ENCODE measurements at regions of chr11 and their contacts with region 1.

Region 1: DNA sequence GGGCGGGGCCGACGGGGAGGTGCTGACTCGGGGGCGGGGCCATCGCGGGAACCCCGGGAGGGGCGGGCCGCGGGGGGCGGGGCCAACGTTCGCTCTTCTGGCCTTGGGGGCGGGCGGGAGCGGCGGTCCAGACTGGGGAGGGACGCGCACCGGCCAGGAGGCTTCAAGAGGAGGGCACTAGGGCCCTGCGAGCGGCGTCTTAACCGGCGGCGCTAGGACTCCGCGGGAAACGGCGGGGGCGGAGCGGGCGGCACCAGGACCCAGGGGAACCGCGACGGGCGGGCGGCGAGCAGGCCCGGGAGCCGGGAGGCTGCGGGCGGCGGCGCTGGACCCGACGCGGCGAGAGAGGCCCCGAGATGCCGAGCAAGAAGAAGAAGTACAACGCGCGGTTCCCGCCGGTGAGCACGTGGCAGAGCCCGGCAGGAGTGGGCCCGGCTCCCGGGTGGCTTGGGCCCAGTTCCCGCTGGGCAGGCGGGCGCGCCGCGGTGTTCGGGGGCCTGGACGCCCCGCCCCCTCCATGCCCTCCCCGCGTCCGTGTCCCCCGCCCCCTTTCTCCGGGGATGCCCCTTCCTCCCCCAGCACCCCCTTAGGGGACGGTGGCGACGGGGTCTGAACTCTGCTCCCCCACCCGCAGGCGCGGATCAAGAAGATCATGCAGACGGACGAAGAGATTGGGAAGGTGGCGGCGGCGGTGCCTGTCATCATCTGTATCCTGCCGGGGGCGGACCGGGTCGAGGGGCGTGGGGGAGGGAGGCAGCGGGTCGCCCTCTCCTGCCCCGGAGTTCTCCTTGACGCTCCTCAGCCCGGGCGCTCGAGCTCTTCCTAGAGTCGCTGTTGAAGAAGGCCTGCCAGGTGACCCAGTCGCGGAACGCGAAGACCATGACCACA is at the start of gene DRAP1:
- DNase-seq: peak; percentile 100
- ATAC-seq: peak; percentile 94
- H3K4me3 Mint-ChIP-seq: peak within 1 kb of the TSS; percentile 91
- H3K27ac Mint-ChIP-seq: peak within 1 kb of the TSS; percentile 88
- H3K4me1 Mint-ChIP-seq: peaks cover 35% of the 10 kb centered on the region
- H3K27me3 Mint-ChIP-seq: no peaks in the 10 kb centered on the region
- total RNA-seq, gene DRAP1: 111 to 158 TPM

Region 2: DNA sequence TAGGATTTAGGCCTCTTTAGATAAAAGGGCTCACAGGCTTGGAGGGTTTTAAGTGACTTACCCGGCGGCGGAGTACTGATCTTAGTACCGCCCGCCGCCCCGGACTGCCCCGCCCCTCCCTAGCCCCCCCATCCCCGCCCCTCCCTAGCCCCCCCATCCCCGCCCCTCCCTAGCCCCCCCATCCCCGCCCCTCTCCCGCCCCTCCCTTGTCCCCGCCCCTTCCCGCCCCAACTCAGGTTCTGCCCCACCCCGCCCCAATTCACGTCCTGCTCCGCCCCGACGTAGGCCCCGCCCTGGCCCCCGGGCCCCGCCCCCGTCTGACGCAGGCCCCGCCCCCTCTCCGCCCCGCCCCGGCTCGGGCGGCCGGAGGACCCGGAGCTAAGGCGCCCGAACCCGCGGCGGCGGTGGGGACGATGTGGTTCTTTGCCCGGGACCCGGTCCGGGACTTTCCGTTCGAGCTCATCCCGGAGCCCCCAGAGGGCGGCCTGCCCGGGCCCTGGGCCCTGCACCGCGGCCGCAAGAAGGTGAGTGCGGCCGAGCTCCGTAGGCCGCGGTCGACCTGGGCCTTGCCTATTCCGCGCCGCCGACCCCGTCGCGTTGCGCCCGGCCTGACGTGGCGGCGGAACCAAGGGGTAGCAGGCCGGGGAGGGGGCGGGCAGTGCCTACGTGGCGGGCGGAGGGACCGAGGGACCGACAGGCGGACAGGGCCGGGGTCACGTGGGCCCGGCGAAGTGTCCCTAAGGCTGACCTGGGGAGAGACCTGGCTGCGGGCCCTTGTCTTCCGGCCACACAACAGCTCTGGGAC is 394.4 kb before region 1 on chr11 and contains the start of gene SCYL1:
- CTCF ChIA-PET with region 1: no interaction called
- POLR2A ChIA-PET with region 1: no interaction called
- intact Hi-C with region 1: loop called in 1 of 2 experiments (anchors 1 kb)
- DNase-seq: peak; percentile 91
- ATAC-seq: peak; percentile 85
- H3K4me3 Mint-ChIP-seq: peak within 1 kb of the TSS; percentile 86
- H3K27ac Mint-ChIP-seq: peak within 1 kb of the TSS; percentile 93
- H3K4me1 Mint-ChIP-seq: peaks cover 51% of the 10 kb centered on the region
- H3K27me3 Mint-ChIP-seq: no peaks in the 10 kb centered on the region
- total RNA-seq, gene SCYL1: 66.5 to 78.8 TPM

Region 3: DNA sequence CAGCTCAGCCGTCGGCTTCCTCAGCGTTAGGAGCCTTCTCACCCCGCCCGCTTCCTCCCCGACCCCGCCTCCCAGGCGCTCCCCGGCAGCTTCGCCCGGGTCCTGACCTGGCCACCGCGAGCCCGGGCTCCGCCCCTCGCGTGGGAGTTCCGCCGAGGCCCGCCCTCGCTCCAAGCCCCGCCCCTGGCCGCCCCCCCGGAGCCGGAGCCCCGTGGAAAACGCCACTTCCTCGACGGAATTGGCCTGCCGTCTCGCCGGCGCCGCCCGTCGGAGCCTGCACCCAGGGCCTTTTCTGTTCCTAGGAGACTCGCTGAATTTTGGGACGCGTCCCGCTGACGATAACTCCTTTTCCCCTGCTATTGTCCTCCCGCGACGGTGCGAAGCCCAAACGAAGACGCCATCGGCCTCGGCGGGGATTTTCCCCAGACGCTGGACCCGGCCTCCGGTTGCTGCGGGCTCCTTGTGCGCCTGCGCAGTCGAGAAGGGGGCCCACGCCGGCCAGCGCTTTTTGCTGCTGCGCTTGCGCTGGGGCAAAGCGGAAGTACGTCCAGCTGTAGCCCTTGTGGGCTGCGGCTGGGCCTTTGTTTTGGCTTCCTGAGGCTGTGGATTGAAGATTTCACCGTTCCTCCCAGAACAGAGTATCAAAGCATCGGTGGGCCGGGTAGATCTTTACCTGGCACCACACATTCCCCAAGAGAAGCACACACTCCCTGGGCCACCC is 266.7 kb before region 1 on chr11:
- CTCF ChIA-PET with region 1: no interaction called
- POLR2A ChIA-PET with region 1: no interaction called
- intact Hi-C with region 1: loop called in 1 of 2 experiments (anchors 1 kb)
- DNase-seq: peak; percentile 98
- ATAC-seq: peak; percentile 89
- H3K4me3 Mint-ChIP-seq: peak overlapping the region; percentile 79
- H3K27ac Mint-ChIP-seq: peak overlapping the region; percentile 95
- H3K4me1 Mint-ChIP-seq: peaks cover 45% of the 10 kb centered on the region
- H3K27me3 Mint-ChIP-seq: no peaks in the 10 kb centered on the region

Region 4: GRCh38 chr11:65720237-65720934 is 199.0 kb before region 1 on chr11 and contains the start of gene RNASEH2C:
- CTCF ChIA-PET with region 1: no interaction called
- POLR2A ChIA-PET with region 1: no interaction called
- intact Hi-C with region 1: loop called in 1 of 2 experiments (anchors 1 kb)
- DNase-seq: peak; percentile 92
- ATAC-seq: peak; percentile 94
- H3K4me3 Mint-ChIP-seq: peak within 1 kb of the TSS; percentile 84
- H3K27ac Mint-ChIP-seq: peak within 1 kb of the TSS; percentile 88
- H3K4me1 Mint-ChIP-seq: peaks cover 23% of the 10 kb centered on the region
- H3K27me3 Mint-ChIP-seq: no peaks in the 10 kb centered on the region
- total RNA-seq, gene RNASEH2C: 72.5 to 96.8 TPM

Region 5: GRCh38 chr11:65873318-65874156 is 45.9 kb before region 1 on chr11:
- CTCF ChIA-PET with region 1: no interaction called
- POLR2A ChIA-PET with region 1: interaction called, 5 read pairs
- intact Hi-C with region 1: loop called in 1 of 2 experiments (anchors 1 kb)
- DNase-seq: peak; percentile 97
- ATAC-seq: peak; percentile 93
- H3K4me3 Mint-ChIP-seq: peak overlapping the region; percentile 84
- H3K27ac Mint-ChIP-seq: peak overlapping the region; percentile 91
- H3K4me1 Mint-ChIP-seq: peaks cover 15% of the 10 kb centered on the region
- H3K27me3 Mint-ChIP-seq: no peaks in the 10 kb centered on the region

Region 6: DNA sequence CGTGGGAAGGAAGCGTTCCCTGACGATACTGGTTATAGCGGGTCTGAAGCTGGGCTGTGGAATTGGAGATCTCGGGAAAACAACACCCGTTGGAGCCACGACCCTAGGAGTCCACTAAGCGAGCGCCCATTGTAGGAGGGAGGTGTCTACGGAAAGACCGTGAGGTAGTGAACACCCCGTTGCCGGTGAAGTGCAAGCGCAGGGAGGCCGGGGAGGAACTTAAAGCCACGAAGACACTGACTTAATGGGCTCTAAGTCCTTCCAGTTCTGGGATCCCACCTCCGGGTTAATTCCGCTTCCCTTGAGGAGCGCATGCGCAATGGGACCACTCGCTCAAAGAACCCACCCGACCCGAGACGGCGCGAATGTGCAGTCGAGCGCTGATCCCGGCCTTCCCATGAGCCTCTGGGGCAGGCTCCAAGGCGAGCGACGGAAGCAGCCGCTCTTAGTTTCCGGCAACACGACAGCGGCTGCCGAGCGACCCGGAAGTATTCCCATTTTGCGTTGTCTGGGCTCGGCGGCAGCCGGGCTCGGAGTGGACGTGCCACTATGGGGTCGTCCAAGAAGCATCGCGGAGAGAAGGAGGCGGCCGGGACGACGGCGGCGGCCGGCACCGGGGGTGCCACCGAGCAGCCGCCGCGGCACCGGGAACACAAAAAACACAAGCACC is 42.0 kb after region 1 on chr11 and contains the start of gene SART1:
- CTCF ChIA-PET with region 1: interaction called, 4 read pairs
- POLR2A ChIA-PET with region 1: no interaction called
- intact Hi-C with region 1: loop called (anchors 1 to 2 kb)
- DNase-seq: peak; percentile 98
- ATAC-seq: peak; percentile 91
- H3K4me3 Mint-ChIP-seq: peak within 1 kb of the TSS; percentile 92
- H3K27ac Mint-ChIP-seq: peak within 1 kb of the TSS; percentile 97
- H3K4me1 Mint-ChIP-seq: peaks cover 37% of the 10 kb centered on the region
- H3K27me3 Mint-ChIP-seq: no peaks in the 10 kb centered on the region
- total RNA-seq, gene SART1: 54.7 to 84.5 TPM

Region 7: GRCh38 chr11:67507864-67508485 is 1588.6 kb after region 1 on chr11 and contains the start of gene CDK2AP2:
- CTCF ChIA-PET with region 1: no interaction called
- POLR2A ChIA-PET with region 1: no interaction called
- intact Hi-C with region 1: no loop called
- DNase-seq: peak; percentile 99
- ATAC-seq: peak; percentile 78
- H3K4me3 Mint-ChIP-seq: peak within 1 kb of the TSS; percentile 89
- H3K27ac Mint-ChIP-seq: peak within 1 kb of the TSS; percentile 88
- H3K4me1 Mint-ChIP-seq: peaks cover 31% of the 10 kb centered on the region
- H3K27me3 Mint-ChIP-seq: no peaks in the 10 kb centered on the region
- total RNA-seq, gene CDK2AP2: 64.1 to 68.7 TPM

Measured in activated CD4-positive, alpha-beta T cell treated with anti-CD3 and anti-CD28 coated beads for 36 hours (primary cell).